ENCODE measurements at regions of chr12 and their contacts with region 1.

Region 1: GRCh38 chr12:25977047-25977446 is 18.6 kb downstream of the RASSF8 start:
- DNase-seq: no peak
- ATAC-seq: no peak
- H3K4me3 ChIP-seq: no peak overlapping the region
- H3K27ac ChIP-seq: peak overlapping the region in 1 of 12 donors; percentile 58
- H3K4me1 ChIP-seq: peaks cover 0 to 63% (median 27%) of the 10 kb centered on the region in 12 donors
- H3K27me3 ChIP-seq: no peaks in the 10 kb centered on the region
- CTCF ChIP-seq: no peak
- POLR2A ChIP-seq: no peak

Region 2: GRCh38 chr12:25997201-25997963 is 20.3 kb after region 1 on chr12:
- intact Hi-C with region 1: loop called in 1 of 10 experiments (anchors 2 kb)
- DNase-seq: no peak
- ATAC-seq: peak in 1 of 4 donors; percentile 63
- H3K4me3 ChIP-seq: no peak overlapping the region
- H3K27ac ChIP-seq: peak overlapping the region in 1 of 12 donors; percentile 9
- H3K4me1 ChIP-seq: peaks cover 0 to 40% (median 14%) of the 10 kb centered on the region in 12 donors
- H3K27me3 ChIP-seq: no peaks in the 10 kb centered on the region
- CTCF ChIP-seq: no peak
- POLR2A ChIP-seq: no peak

Region 3: GRCh38 chr12:26011099-26011498 is 34.1 kb after region 1 on chr12:
- intact Hi-C with region 1: loop called in 2 of 10 experiments (anchors 5 kb)
- DNase-seq: no peak
- ATAC-seq: peak; percentile 78 to 94 (median 92)
- H3K4me3 ChIP-seq: no peak overlapping the region
- H3K27ac ChIP-seq: peak overlapping the region; percentile 38 to 84 (median 60)
- H3K4me1 ChIP-seq: peaks cover 15 to 54% (median 33%) of the 10 kb centered on the region in 12 donors
- H3K27me3 ChIP-seq: no peaks in the 10 kb centered on the region
- CTCF ChIP-seq: no peak
- POLR2A ChIP-seq: no peak